Activated naive CD4-positive, alpha-beta T cell treated with anti-CD3 and anti-CD28 coated beads, Interleukin-2, amount 10 ng/mL, durations not matched to agents 7 days and 5 days (primary cell): ENCODE measurements at regions of chrX and their contacts with region 1.

Region 1: DNA sequence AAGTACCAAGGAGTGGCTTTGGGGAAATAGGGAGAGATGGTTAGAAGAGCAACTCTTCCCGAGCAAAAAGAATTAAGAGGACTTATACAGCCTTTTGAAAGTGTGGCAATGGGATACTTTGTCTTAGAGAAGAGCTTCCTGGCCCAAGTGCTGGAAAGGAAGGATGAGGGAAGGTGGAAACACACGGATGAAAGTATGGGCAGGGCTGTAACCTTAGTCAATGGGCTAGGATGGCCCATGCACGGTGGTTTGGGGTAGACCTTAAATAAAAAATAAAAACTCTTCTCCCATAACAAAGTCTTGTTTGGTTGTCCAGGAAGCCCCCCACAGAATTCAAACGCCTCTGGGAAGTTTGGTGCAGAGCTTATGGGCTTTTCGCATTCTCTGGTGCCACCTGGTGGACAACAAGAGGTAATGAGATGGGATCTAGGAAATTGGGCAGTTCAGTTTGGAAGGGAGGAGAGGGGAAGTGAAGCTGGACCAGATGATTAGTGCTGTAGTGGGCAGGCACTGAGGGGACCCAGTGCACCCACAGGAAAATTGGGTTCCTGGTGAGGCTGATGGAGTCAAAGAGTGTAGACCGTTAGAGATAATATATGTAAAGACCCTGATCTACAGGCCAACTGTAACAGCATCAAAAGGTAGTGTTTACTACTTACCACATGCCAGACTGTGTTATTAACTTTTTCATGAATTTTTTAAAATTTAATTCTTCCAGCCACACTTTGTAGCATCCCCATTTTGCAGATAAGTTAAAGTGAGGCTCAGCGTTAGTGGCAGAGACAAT is 13.8 kb upstream of the ENOX2 start:
- DNase-seq: peak; percentile 50
- H3K4me3 Mint-ChIP-seq: no peak overlapping the region
- H3K27ac Mint-ChIP-seq: no peak overlapping the region
- H3K4me1 Mint-ChIP-seq: no peaks in the 10 kb centered on the region
- H3K27me3 Mint-ChIP-seq: peaks cover 9% of the 10 kb centered on the region

Region 2: DNA sequence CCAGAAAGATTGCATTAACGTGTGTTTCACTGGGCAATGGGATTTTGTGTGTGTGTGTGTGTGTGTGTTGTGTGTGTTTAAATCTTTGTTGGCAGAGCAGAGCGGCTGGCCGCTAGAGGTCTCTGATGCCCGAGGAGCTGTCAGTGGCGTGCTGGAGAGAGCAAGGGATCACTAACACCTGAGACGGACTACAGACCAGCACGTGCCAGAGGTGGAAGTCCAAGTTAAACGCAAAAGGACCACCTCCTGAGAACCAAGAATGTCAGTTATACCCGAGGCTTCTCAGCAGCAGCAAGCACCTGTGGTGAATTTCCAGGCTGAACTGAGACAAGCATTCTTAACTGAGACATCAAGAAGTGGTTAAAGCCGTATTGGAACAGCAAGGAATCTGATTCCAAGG is 586.1 kb before region 1 on chrX:
- CTCF ChIA-PET with region 1: interaction called, 10 read pairs
- DNase-seq: peak; percentile 54
- H3K4me3 Mint-ChIP-seq: no peak overlapping the region
- H3K27ac Mint-ChIP-seq: no peak overlapping the region
- H3K4me1 Mint-ChIP-seq: no peaks in the 10 kb centered on the region
- H3K27me3 Mint-ChIP-seq: peaks cover 13% of the 10 kb centered on the region

Region 3: DNA sequence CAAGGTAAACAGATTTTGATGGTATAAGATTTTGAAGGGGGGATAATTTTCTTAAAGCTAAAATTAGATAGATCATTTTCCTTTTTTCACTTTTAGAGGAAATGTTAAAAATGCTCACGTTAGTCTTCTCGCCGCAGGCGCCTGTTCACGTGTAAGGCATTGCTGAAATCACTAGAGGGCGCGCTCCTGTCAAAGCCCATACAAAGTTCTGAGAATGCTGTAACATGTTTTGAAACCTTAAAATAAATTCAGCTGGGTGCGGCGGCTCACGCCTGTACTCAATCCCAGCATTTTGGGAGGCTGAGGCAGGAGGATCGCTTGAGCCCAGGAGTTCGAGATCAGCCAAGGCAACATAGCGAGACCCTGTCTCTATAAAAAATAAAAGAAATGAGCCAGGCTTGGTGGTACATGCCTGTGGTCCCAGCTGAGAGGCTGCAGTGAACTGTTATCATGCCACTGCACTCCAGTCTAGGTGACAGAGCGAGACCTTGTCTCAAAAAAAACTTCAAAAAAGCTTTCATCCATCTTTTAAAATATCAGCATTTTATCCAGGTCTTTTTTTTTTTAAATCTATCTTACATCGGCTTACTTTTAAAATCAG is 377.0 kb before region 1 on chrX:
- CTCF ChIA-PET with region 1: interaction called, 17 read pairs
- DNase-seq: peak; percentile 58
- H3K4me3 Mint-ChIP-seq: no peak overlapping the region
- H3K27ac Mint-ChIP-seq: no peak overlapping the region
- H3K4me1 Mint-ChIP-seq: no peaks in the 10 kb centered on the region
- H3K27me3 Mint-ChIP-seq: no peaks in the 10 kb centered on the region

Region 4: DNA sequence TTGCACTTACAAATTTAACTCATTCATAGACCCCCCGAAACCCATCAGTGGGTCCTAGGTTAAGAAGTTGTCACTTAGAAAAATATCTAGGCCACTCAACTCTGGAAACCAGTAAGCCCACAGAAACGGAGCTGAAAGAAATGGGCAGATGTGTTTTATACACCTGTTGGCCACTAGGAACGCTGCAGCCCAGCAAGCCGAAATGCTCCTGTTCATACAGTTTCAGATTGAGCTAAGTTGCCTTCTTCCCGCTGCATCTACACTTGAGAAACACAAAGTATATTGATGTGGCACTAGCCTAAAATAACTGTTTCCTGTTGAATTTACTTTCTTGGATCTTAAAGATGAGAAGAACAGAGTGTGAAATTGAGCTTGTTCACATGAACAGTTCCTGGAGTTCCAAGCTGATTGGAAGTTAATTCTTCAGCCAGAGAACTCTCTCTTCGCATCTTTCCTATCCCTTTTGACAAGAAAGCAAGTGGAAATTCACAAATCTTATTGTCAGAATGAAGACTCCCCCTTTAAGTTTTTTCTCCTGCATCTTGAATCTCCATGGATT is 340.9 kb before region 1 on chrX:
- CTCF ChIA-PET with region 1: interaction called, 11 read pairs
- DNase-seq: peak; percentile 37
- H3K4me3 Mint-ChIP-seq: no peak overlapping the region
- H3K27ac Mint-ChIP-seq: no peak overlapping the region
- H3K4me1 Mint-ChIP-seq: no peaks in the 10 kb centered on the region
- H3K27me3 Mint-ChIP-seq: no peaks in the 10 kb centered on the region

Region 5: DNA sequence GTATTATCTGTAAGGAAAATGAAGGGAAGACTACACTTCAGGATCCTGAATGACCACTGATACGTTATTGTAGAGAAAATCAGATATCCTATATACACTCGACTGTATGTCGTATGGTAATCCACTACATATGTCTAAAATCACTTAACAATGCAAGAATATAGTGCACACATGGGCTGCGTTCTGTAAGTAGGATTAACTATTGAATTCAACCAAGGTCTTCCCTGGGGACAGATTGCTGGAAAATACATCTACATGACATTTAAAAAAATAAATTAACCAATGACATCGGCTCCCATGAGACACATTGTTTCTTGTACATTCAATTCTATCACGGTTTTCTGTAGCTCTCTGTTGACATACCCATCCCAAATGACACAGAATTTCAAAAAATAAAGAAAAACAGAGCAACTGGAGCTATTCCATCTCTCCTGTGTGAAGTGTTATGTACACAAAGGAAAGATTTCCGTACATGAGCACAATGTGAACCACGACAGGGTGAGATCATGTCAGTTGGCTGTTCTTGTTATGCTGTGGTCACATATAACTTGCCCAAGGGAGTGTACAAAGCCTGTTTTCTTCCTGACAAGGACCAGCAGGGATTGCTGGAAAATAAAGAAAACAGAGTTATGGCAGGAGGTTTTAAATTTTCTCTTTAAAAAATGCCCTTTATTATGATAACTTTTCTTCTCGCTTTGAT is 19.9 kb before region 1 on chrX:
- CTCF ChIA-PET with region 1: no interaction called
- DNase-seq: no peak
- H3K4me3 Mint-ChIP-seq: no peak overlapping the region
- H3K27ac Mint-ChIP-seq: no peak overlapping the region
- H3K4me1 Mint-ChIP-seq: peaks cover 4% of the 10 kb centered on the region
- H3K27me3 Mint-ChIP-seq: no peaks in the 10 kb centered on the region

Region 6: DNA sequence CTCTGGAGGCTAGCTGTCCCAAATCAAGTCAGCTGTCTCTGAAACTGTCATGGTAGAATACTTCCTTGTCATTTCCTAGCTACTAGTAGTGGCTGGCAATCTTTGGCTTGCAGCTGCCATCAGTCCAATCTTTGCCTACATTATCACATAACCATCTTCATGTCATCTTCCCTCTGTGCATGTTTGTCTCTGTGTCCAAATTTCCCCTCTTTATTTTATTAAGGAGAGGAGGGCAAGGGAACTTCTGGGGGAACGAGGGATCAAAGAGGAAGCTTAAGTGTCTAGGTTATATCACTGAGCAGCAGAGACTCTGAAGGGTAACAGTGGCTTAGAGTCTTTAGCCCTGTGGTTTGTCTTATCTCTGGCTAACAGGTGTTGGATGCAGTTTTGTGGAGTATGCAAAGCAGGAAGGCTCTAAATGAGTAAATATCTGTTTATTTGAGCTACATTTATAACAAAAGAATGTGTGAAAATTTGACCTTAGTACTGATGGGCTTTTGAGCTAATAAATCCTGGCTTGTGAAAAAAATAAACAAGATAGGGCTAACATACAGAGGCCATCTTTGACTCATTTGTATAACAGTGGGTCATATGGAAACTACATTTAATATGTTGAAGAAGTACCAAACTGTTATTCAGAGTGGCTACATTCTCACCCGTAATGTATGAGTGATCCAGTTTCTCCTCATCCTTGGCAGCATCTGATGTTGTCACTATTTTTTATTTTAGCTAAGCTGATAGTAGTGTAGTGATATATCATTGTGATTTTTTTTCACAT is 35.6 kb after region 1 on chrX:
- CTCF ChIA-PET with region 1: no interaction called
- DNase-seq: no peak
- H3K4me3 Mint-ChIP-seq: no peak overlapping the region
- H3K27ac Mint-ChIP-seq: no peak overlapping the region
- H3K4me1 Mint-ChIP-seq: no peaks in the 10 kb centered on the region
- H3K27me3 Mint-ChIP-seq: peaks cover 3% of the 10 kb centered on the region